Naive thymus-derived CD4-positive, alpha-beta T cell (primary cell): ENCODE measurements at regions of chr15 and their contacts with region 1.

Region 1: DNA sequence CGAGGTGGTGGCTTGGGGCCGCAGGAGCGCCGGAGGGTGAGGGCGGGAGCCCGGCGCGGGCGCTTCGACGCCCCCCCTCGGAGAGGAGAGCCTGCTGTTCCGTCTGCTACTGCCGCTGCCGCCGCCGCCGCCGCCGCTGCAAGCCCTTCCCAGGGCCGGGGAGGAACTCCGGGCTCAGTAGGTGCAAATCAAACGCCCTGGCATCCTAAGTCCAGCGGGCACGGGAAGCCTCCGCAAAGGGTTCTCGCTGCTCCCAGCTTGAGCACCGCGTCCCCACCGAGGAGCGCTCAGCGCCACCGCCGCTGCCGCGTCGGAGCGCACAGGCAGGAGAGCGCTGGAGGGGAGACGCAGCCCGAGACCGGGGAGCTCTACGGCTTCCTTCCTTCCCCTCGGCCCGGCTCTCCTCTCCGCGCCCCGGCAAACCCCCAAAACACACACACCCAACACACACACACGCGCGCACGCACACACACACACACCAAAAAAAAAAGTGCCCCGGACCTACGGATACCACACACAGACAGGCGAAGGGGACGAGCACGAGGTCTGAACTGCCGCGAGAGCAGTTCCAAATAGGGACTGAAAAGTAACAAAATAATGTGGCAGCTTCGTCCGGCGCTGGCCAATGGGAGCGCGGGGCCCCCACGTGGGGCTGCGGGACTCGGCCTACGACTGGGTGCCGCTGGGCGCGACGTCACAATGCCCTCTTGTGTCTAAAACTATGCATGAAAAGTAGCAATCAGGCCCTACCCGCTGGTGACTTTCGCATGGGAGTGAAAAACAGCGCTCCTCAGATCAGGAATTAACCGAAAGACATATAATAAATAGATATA is at the start of gene TLE3:
- DNase-seq: peak; percentile 94 to 99 (median 98)
- ATAC-seq: peak; percentile 72
- H3K4me3 ChIP-seq: peak within 1 kb of the TSS; percentile 87
- H3K4me3 Mint-ChIP-seq: peak within 1 kb of the TSS; percentile 91 to 100 (median 99)
- H3K27ac ChIP-seq: peak within 1 kb of the TSS; percentile 87
- H3K27ac Mint-ChIP-seq: peak within 1 kb of the TSS; percentile 96 to 100 (median 98)
- H3K4me1 ChIP-seq: peaks cover 33 to 44% of the 10 kb centered on the region in 2 donors
- H3K4me1 Mint-ChIP-seq: peaks cover 34 to 62% (median 39%) of the 10 kb centered on the region in 7 donors
- H3K27me3 ChIP-seq: no peaks in the 10 kb centered on the region
- H3K27me3 Mint-ChIP-seq: peaks cover 0 to 27% (median 4%) of the 10 kb centered on the region in 5 donors
- total RNA-seq, gene TLE3: 84.5 to 183 (median 120) TPM

Region 2: DNA sequence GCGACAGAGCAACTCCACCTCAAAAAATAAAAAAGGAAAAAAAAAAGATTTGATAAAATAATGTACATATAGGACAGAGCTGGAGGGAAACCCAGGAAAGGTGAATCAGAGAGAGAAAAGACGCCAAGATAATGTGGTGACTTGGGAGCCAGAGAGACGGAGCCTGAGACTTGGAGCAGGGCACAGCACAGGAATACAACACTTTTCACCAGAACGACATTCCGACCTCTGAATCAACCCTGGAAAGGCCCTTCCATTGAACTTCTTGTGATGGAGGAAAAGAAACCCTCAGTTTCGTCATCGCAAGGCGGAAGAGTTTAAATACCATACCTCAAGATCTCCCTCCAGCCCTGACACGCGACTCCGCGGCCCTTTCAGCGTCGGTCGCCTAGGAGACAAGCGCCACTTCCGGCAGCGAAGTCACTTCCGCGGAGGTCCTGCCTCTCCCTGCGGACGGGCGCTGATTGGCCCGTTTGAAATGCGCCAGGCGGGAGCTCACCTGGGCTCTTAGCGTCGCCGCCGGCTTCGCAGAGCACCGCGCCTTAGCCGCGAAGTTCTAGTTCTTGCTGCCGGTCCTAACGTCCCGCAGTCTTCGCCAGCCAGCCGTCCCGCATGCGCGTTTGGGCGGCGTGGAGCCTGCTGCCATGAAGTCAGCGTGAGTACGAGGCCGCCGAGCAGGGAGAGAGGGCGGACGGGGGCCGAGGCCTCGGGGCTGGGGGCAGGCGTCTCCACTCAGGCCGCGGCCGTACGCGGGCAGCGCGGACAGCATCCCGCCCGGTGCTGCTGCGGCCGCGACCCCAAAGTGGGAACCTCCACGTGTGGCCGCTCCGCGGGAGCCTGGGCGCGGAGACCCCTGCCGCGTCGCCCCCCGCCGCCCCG is 683.5 kb before region 1 on chr15 and contains the start of gene KIF23:
- CTCF ChIA-PET with region 1: no interaction called
- POLR2A ChIA-PET with region 1: no interaction called
- intact Hi-C with region 1: loop called (anchors 2 kb)
- DNase-seq: peak; percentile 84 to 93 (median 90)
- ATAC-seq: peak; percentile 98
- H3K4me3 ChIP-seq: peak within 1 kb of the TSS; percentile 66
- H3K4me3 Mint-ChIP-seq: peak within 1 kb of the TSS; percentile 81 to 88 (median 86)
- H3K27ac ChIP-seq: no peak within 1 kb of the TSS
- H3K27ac Mint-ChIP-seq: peak within 1 kb of the TSS in 7 of 9 donors; percentile 34 to 86 (median 78)
- H3K4me1 ChIP-seq: peaks cover 0 to 4% of the 10 kb centered on the region in 2 donors
- H3K4me1 Mint-ChIP-seq: peaks cover 0 to 36% (median 7%) of the 10 kb centered on the region in 7 donors
- H3K27me3 ChIP-seq: peaks cover 0 to 9% of the 10 kb centered on the region in 2 donors
- H3K27me3 Mint-ChIP-seq: peaks cover 8 to 22% (median 10%) of the 10 kb centered on the region in 5 donors
- total RNA-seq, gene KIF23: 0.30 to 39.4 (median 0.72) TPM in 4 of 5 experiments, not detected in the other

Region 3: DNA sequence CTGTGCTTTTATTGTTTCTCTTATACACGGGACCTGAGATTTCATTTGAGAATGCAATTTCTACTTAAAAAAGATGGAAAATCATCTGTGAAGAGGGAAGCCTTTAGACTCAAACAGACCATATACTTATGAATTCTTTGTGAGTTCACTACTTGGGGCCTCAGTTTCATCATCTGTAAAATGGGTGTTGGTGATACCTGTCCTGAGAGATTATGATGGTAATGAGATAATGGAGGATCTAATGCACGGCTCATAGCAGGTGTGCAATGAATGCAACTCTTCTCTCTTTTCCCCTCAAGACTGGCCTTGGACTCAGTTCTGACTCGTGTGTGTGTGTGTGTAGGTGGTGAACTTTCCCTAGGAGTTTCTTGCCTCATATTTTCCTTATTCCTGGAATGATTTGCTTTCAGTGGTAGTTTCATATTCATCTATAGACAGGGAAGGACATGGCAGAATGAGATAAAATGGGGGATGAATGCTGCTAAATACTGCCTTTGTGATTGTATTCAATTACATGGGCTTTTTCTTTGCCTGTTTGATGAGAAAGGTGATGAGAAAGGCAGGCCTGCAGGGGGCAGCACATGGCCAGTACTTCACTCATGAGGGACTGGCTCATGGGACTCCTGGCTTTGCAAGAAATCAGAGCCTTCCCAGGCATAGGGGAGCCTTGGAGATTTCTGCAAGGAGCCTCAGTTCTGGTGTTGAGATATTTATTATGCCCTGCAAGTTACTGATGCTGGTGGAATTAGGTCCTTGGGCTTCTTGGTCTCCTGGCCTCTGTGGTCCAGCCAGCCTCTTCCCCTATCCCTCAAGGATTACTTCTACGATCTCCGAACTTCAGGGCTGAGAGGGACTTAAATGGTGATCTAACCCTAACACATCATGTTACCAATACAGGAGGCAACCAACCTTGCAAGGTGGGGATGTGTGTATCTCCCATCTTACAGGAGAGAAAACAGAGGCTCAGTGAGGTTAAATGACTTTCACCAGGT is 574.2 kb before region 1 on chr15:
- CTCF ChIA-PET with region 1: no interaction called
- POLR2A ChIA-PET with region 1: no interaction called
- intact Hi-C with region 1: loop called in 1 of 2 experiments (anchors 5 kb)
- DNase-seq: peak; percentile 17 to 66 (median 40)
- ATAC-seq: peak; percentile 67
- H3K4me3 ChIP-seq: no peak overlapping the region
- H3K4me3 Mint-ChIP-seq: no peak overlapping the region
- H3K27ac ChIP-seq: no peak overlapping the region
- H3K27ac Mint-ChIP-seq: no peak overlapping the region
- H3K4me1 ChIP-seq: no peaks in the 10 kb centered on the region
- H3K4me1 Mint-ChIP-seq: peaks cover 0 to 3% (median 0%) of the 10 kb centered on the region in 7 donors
- H3K27me3 ChIP-seq: no peaks in the 10 kb centered on the region
- H3K27me3 Mint-ChIP-seq: peaks cover 0 to 29% (median 0%) of the 10 kb centered on the region in 5 donors

Region 4: DNA sequence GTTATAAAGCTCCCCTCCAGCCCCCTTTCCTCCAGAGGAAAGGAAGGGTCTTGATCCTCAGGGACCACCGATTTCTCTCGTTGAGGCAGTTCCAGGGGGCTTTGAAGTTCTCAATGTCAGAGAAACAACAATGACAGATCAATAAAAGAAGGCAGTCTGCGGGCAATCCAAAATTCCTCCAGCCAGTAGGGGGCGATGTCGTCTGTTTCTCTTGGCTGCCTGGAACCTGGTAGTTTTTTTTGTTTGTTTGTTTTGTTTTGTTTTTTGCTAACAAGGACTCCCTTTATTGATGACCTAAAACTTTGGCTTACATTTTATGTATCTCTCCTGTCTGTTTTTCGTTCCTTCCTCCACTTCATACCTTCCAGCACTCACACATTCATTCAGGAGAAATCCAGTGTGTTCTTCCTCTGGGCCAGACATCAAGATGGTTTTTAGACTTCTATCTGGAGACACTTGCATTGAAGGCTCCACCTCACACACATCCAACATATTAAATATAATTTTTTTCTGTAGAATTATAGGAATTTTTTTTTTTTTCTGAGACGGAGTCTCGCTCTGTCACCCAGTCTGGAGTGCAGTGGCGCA is 368.3 kb before region 1 on chr15:
- CTCF ChIA-PET with region 1: interaction called, 3 read pairs
- POLR2A ChIA-PET with region 1: interaction called, 7 read pairs
- intact Hi-C with region 1: loop called (anchors 1 to 2 kb)
- DNase-seq: peak; percentile 38 to 79 (median 61)
- ATAC-seq: peak; percentile 53
- H3K4me3 ChIP-seq: no peak overlapping the region
- H3K4me3 Mint-ChIP-seq: no peak overlapping the region
- H3K27ac ChIP-seq: no peak overlapping the region
- H3K27ac Mint-ChIP-seq: peak overlapping the region in 3 of 9 donors; percentile 5 to 22 (median 19)
- H3K4me1 ChIP-seq: peaks cover 0 to 12% of the 10 kb centered on the region in 2 donors
- H3K4me1 Mint-ChIP-seq: peaks cover 13 to 64% (median 23%) of the 10 kb centered on the region in 7 donors
- H3K27me3 ChIP-seq: no peaks in the 10 kb centered on the region
- H3K27me3 Mint-ChIP-seq: peaks cover 0 to 30% (median 0%) of the 10 kb centered on the region in 5 donors

Region 5: GRCh38 chr15:70023064-70023768 is 74.3 kb before region 1 on chr15:
- CTCF ChIA-PET with region 1: no interaction called
- POLR2A ChIA-PET with region 1: no interaction called
- intact Hi-C with region 1: loop called (anchors 1 kb)
- DNase-seq: peak in 8 of 9 donors; percentile 32 to 65 (median 46)
- ATAC-seq: peak; percentile 95
- H3K4me3 ChIP-seq: no peak overlapping the region
- H3K4me3 Mint-ChIP-seq: peak overlapping the region in 3 of 10 donors; percentile 42 to 80 (median 43)
- H3K27ac ChIP-seq: no peak overlapping the region
- H3K27ac Mint-ChIP-seq: peak overlapping the region in 6 of 9 donors; percentile 23 to 89 (median 56)
- H3K4me1 ChIP-seq: peaks cover 10 to 17% of the 10 kb centered on the region in 2 donors
- H3K4me1 Mint-ChIP-seq: peaks cover 9 to 26% (median 14%) of the 10 kb centered on the region in 7 donors
- H3K27me3 ChIP-seq: no peaks in the 10 kb centered on the region
- H3K27me3 Mint-ChIP-seq: peaks cover 0 to 26% (median 0%) of the 10 kb centered on the region in 5 donors

Region 6: DNA sequence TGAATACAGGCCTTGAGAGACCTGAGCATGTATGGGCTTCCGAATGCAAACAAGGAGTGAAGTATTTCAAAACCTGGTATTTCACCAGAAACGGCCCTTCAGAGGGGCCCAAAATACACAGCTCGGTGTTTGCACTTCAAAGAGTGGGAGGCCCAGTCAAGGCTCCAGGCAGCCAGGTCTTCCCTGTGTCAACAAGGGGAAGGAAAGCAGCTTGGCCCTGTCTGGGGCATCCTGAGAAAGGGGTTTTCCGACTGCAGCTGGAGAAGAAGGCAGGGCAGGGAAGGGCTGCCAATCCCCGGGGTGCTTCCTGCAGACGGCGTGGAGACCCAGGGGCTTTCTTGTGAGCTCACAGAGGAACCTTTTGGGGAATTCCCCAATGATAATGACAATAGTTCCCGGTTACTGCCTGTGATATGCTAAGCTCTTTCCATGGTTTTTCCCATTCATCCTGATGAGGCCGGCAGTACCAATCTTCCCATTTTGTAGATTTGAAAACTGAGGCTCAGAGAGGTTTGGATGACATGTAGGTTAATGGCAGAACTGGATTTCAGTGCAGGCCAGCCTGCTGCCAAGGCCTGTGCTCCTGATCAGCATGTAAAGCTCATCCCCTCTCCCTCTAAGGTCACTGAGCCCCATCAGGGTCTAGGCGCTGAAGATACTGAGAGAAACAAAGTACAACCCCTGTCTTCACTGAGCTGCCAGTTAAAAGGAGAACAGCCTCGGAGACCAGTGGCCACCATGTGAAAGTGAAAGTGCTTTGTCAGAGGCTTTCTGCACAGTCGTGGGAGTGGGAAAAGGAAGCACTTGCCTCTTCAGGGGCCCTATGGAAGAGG is 43.2 kb after region 1 on chr15:
- CTCF ChIA-PET with region 1: no interaction called
- POLR2A ChIA-PET with region 1: no interaction called
- intact Hi-C with region 1: loop called in 1 of 2 experiments (anchors 5 kb)
- DNase-seq: peak in 6 of 9 donors; percentile 6 to 42 (median 16)
- ATAC-seq: peak; percentile 68
- H3K4me3 ChIP-seq: peak overlapping the region; percentile 1
- H3K4me3 Mint-ChIP-seq: peak overlapping the region; percentile 36 to 79 (median 62)
- H3K27ac ChIP-seq: no peak overlapping the region
- H3K27ac Mint-ChIP-seq: peak overlapping the region in 6 of 9 donors; percentile 30 to 83 (median 52)
- H3K4me1 ChIP-seq: peaks cover 17 to 19% of the 10 kb centered on the region in 2 donors
- H3K4me1 Mint-ChIP-seq: peaks cover 21 to 31% (median 25%) of the 10 kb centered on the region in 7 donors
- H3K27me3 ChIP-seq: no peaks in the 10 kb centered on the region
- H3K27me3 Mint-ChIP-seq: peaks cover 0 to 53% (median 11%) of the 10 kb centered on the region in 5 donors

Region 7: GRCh38 chr15:70535071-70535954 is 437.8 kb after region 1 on chr15:
- CTCF ChIA-PET with region 1: no interaction called
- POLR2A ChIA-PET with region 1: interaction called, 8 read pairs
- intact Hi-C with region 1: loop called in 1 of 2 experiments (anchors 1 kb)
- DNase-seq: peak; percentile 35 to 82 (median 77)
- ATAC-seq: peak; percentile 86
- H3K4me3 ChIP-seq: peak overlapping the region; percentile 66
- H3K4me3 Mint-ChIP-seq: peak overlapping the region; percentile 83 to 99 (median 92)
- H3K27ac ChIP-seq: peak overlapping the region; percentile 74
- H3K27ac Mint-ChIP-seq: peak overlapping the region; percentile 87 to 97 (median 95)
- H3K4me1 ChIP-seq: peaks cover 33 to 50% of the 10 kb centered on the region in 2 donors
- H3K4me1 Mint-ChIP-seq: peaks cover 44 to 87% (median 75%) of the 10 kb centered on the region in 7 donors
- H3K27me3 ChIP-seq: no peaks in the 10 kb centered on the region
- H3K27me3 Mint-ChIP-seq: peaks cover 0 to 23% (median 0%) of the 10 kb centered on the region in 5 donors